Endothelial cell of umbilical vein (primary cell): ENCODE measurements at regions of chr14 and their contacts with region 1.

Region 1: GRCh38 chr14:64823305-64823861 is 56.3 kb downstream of the SPTB start:
- DNase-seq: peak; percentile 36
- H3K4me3 ChIP-seq: no peak overlapping the region
- H3K27ac ChIP-seq: no peak overlapping the region
- H3K4me1 ChIP-seq: no peaks in the 10 kb centered on the region
- H3K27me3 ChIP-seq: peaks cover 8 to 19% of the 10 kb centered on the region in 2 experiments
- CTCF ChIP-seq: peak; percentile 70 to 83
- POLR2A ChIP-seq: no peak

Region 2: GRCh38 chr14:64681796-64682710 is 141.3 kb before region 1 on chr14:
- CTCF ChIA-PET with region 1: no interaction called
- POLR2A ChIA-PET with region 1: no interaction called
- dilution Hi-C with region 1: no loop called
- intact Hi-C with region 1: no loop called
- DNase-seq: peak; percentile 69
- H3K4me3 ChIP-seq: no peak overlapping the region
- H3K27ac ChIP-seq: no peak overlapping the region
- H3K4me1 ChIP-seq: no peaks in the 10 kb centered on the region
- H3K27me3 ChIP-seq: peaks cover 0 to 3% of the 10 kb centered on the region in 2 experiments
- CTCF ChIP-seq: no peak
- POLR2A ChIP-seq: no peak

Region 3: DNA sequence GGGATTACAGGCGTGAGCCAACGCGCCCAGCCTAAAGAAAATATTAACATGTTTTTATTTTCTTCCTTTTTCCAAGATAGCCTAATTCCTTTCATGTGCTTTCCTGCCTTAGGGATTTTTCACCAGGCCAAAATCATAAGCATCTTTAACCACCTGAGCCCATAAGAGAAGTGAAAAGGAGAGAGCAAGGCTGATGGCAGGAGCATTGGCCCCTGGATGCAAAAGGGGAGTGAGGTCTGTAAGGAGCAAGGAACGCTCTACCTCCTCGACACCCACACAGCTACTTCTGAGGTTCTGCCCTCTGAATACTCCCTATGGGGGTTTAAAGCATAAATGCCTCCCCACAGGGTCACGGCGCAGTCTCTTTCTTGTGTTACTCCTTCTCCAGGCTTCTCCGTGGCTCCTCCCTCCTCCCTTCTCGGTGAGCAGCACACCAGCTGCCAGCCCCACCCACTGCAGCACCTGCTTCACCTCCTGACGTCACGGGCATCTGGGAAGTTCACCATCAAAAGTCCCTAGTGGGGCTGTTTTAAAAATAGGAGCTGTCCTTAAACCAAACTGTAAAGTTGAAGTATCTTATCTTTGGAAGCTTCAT is 11.1 kb before region 1 on chr14:
- CTCF ChIA-PET with region 1: interaction called, 19 read pairs
- POLR2A ChIA-PET with region 1: no interaction called
- dilution Hi-C with region 1: no loop called
- intact Hi-C with region 1: no loop called
- DNase-seq: no peak
- H3K4me3 ChIP-seq: no peak overlapping the region
- H3K27ac ChIP-seq: no peak overlapping the region
- H3K4me1 ChIP-seq: no peaks in the 10 kb centered on the region
- H3K27me3 ChIP-seq: peaks cover 22% of the 10 kb centered on the region in 2 experiments
- CTCF ChIP-seq: no peak
- POLR2A ChIP-seq: no peak

Region 4: GRCh38 chr14:64835431-64835830 is 12.0 kb after region 1 on chr14:
- CTCF ChIA-PET with region 1: interaction called, 16 read pairs
- POLR2A ChIA-PET with region 1: no interaction called
- dilution Hi-C with region 1: no loop called
- intact Hi-C with region 1: no loop called
- DNase-seq: no peak
- H3K4me3 ChIP-seq: no peak overlapping the region
- H3K27ac ChIP-seq: no peak overlapping the region
- H3K4me1 ChIP-seq: no peaks in the 10 kb centered on the region
- H3K27me3 ChIP-seq: peaks cover 9 to 13% of the 10 kb centered on the region in 2 experiments
- CTCF ChIP-seq: no peak
- POLR2A ChIP-seq: no peak

Region 5: GRCh38 chr14:64937171-64937820 is 113.9 kb after region 1 on chr14:
- CTCF ChIA-PET with region 1: interaction called, 10 read pairs
- POLR2A ChIA-PET with region 1: no interaction called
- dilution Hi-C with region 1: no loop called
- intact Hi-C with region 1: no loop called
- DNase-seq: no peak
- H3K4me3 ChIP-seq: no peak overlapping the region
- H3K27ac ChIP-seq: no peak overlapping the region
- H3K4me1 ChIP-seq: no peaks in the 10 kb centered on the region
- H3K27me3 ChIP-seq: no peaks in the 10 kb centered on the region
- CTCF ChIP-seq: no peak
- POLR2A ChIP-seq: no peak